ENCODE measurements at regions of chr6 and their contacts with region 1.

Region 1: DNA sequence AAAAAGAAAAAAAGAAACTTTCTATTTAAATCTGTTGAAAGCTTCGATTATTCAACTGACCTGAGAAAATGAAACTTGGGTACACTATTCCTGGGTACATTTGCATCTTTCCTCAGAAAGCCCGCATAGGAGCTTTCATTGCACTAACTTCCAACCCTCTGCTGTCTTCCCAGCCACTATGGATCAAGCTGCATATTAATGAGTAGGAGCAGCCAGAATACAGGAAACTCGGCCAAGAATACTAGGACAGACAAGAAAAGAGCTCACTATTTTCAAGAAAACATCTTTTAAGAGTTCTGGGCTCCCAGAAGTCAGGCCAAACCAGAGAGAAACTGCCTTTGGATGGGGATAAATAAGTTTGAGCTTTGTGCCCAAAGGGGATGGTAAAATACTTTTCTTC is 135.0 kb upstream of the CCDC28A start:
- DNase-seq: no peak
- ATAC-seq: no peak; the same call in 1 of the 3 replicates
- H3K4me3 ChIP-seq: peak overlapping the region; percentile 52; the same call in 1 of the 2 replicates
- H3K27ac ChIP-seq: no peak overlapping the region
- H3K4me1 ChIP-seq: no peaks in the 10 kb centered on the region
- H3K27me3 ChIP-seq: no peaks in the 10 kb centered on the region
- CTCF ChIP-seq: no peak
- EP300 ChIP-seq: no peak
- POLR2A ChIP-seq: no peak
- RAD21 ChIP-seq: no peak

Region 2: GRCh38 chr6:137754366-137754765 is 884.2 kb before region 1 on chr6:
- CTCF ChIA-PET with region 1: no interaction called
- POLR2A ChIA-PET with region 1: no interaction called
- RAD21 ChIA-PET with region 1: no interaction called
- SMC1A ChIA-PET with region 1: no interaction called
- in situ Hi-C with region 1: no loop called
- intact Hi-C with region 1: no loop called
- DNase-seq: no peak
- ATAC-seq: peak; percentile 86
- H3K4me3 ChIP-seq: no peak overlapping the region
- H3K27ac ChIP-seq: peak overlapping the region; percentile 59
- H3K4me1 ChIP-seq: peaks cover 38% of the 10 kb centered on the region
- H3K27me3 ChIP-seq: no peaks in the 10 kb centered on the region
- CTCF ChIP-seq: no peak
- EP300 ChIP-seq: no peak
- POLR2A ChIP-seq: no peak
- RAD21 ChIP-seq: no peak

Region 3: GRCh38 chr6:138622967-138623366 is 15.6 kb before region 1 on chr6:
- CTCF ChIA-PET with region 1: interaction called, 6 read pairs
- POLR2A ChIA-PET with region 1: interaction called, 8 read pairs
- RAD21 ChIA-PET with region 1: interaction called, 4 read pairs
- SMC1A ChIA-PET with region 1: interaction called, 15 read pairs
- in situ Hi-C with region 1: no loop called
- intact Hi-C with region 1: no loop called
- DNase-seq: no peak
- ATAC-seq: no peak
- H3K4me3 ChIP-seq: no peak overlapping the region
- H3K27ac ChIP-seq: no peak overlapping the region
- H3K4me1 ChIP-seq: no peaks in the 10 kb centered on the region
- H3K27me3 ChIP-seq: no peaks in the 10 kb centered on the region
- CTCF ChIP-seq: no peak
- EP300 ChIP-seq: no peak
- POLR2A ChIP-seq: no peak
- RAD21 ChIP-seq: no peak

Region 4: DNA sequence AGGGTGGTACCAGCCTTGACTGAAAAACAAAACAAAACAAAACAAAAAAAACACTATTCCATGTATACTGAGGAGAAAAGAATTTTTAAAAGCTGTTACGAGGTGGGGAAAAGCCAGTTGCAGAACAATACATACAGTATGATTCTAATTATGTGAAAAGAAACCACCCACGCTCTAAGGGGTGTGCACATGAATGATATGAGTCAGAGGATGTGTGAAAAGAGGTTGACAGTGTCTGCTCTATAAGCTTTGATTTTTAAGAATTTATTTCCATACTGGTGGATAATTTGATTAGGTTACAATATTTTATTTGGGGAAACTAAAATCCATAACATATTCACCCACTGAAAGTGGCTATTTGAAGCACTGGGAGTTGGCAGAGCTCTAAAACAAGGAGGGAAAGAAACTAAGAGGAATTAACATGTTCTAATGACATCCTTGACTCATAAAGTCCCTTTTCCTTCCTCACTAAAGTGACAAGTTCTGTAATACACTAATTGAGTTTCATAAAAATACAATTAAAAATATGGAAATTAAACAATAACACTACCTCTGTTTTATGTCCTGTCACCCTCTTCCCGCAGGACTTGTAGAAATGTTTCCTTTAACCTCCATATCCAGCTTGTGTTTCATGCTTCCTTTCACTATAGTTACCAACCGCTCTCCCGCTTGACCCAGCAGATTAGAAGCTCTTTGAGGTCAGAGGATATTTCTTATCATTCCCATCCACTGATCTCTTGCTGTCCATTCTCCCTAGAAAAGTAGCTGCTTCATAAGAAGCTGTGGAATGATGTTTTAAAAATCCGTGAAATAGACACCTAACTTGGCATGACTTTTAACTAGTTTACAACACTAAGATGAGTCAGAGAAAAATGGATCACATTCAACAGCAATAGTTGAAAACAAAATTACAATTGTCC is 16.4 kb after region 1 on chr6:
- CTCF ChIA-PET with region 1: interaction called, 12 read pairs
- POLR2A ChIA-PET with region 1: interaction called, 31 read pairs
- RAD21 ChIA-PET with region 1: interaction called, 22 read pairs
- SMC1A ChIA-PET with region 1: interaction called, 46 read pairs
- in situ Hi-C with region 1: no loop called
- intact Hi-C with region 1: no loop called
- DNase-seq: peak; percentile 50
- ATAC-seq: peak; percentile 98
- H3K4me3 ChIP-seq: no peak overlapping the region
- H3K27ac ChIP-seq: no peak overlapping the region
- H3K4me1 ChIP-seq: peaks cover 9% of the 10 kb centered on the region
- H3K27me3 ChIP-seq: no peaks in the 10 kb centered on the region
- CTCF ChIP-seq: no peak
- EP300 ChIP-seq: peak; percentile 71 to 95; a peak in 3 of 4 replicates
- POLR2A ChIP-seq: no peak
- RAD21 ChIP-seq: no peak

Region 5: GRCh38 chr6:138673346-138674014 is 34.9 kb after region 1 on chr6:
- CTCF ChIA-PET with region 1: interaction called, 4 read pairs
- POLR2A ChIA-PET with region 1: interaction called, 8 read pairs
- RAD21 ChIA-PET with region 1: interaction called, 5 read pairs
- SMC1A ChIA-PET with region 1: interaction called, 13 read pairs
- in situ Hi-C with region 1: no loop called
- intact Hi-C with region 1: no loop called
- DNase-seq: no peak
- ATAC-seq: no peak
- H3K4me3 ChIP-seq: no peak overlapping the region
- H3K27ac ChIP-seq: no peak overlapping the region
- H3K4me1 ChIP-seq: no peaks in the 10 kb centered on the region
- H3K27me3 ChIP-seq: no peaks in the 10 kb centered on the region
- CTCF ChIP-seq: no peak
- EP300 ChIP-seq: no peak
- POLR2A ChIP-seq: no peak
- RAD21 ChIP-seq: no peak

Region 6: GRCh38 chr6:138882369-138883017 is 243.9 kb after region 1 on chr6:
- CTCF ChIA-PET with region 1: no interaction called
- POLR2A ChIA-PET with region 1: no interaction called
- RAD21 ChIA-PET with region 1: no interaction called
- SMC1A ChIA-PET with region 1: no interaction called
- in situ Hi-C with region 1: no loop called
- intact Hi-C with region 1: no loop called
- DNase-seq: peak; percentile 74
- ATAC-seq: peak; percentile 91
- H3K4me3 ChIP-seq: peak overlapping the region; percentile 36; the same call in 1 of the 2 replicates
- H3K27ac ChIP-seq: peak overlapping the region; percentile 95
- H3K4me1 ChIP-seq: peaks cover 22% of the 10 kb centered on the region
- H3K27me3 ChIP-seq: no peaks in the 10 kb centered on the region
- CTCF ChIP-seq: no peak
- EP300 ChIP-seq: peak; percentile 79 to 87
- POLR2A ChIP-seq: no peak
- RAD21 ChIP-seq: no peak

Measured in GM12878 (cell line).